AG04450 (cell line): ENCODE measurements at regions of chr7 and their contacts with region 1.

Region 1: GRCh38 chr7:84073186-84073875 is 121.3 kb downstream of the SEMA3A start:
- DNase-seq: no peak
- H3K4me3 ChIP-seq: no peak overlapping the region
- H3K27ac ChIP-seq: no peak overlapping the region
- H3K27me3 ChIP-seq: no peaks in the 10 kb centered on the region
- CTCF ChIP-seq: no peak

Region 2: DNA sequence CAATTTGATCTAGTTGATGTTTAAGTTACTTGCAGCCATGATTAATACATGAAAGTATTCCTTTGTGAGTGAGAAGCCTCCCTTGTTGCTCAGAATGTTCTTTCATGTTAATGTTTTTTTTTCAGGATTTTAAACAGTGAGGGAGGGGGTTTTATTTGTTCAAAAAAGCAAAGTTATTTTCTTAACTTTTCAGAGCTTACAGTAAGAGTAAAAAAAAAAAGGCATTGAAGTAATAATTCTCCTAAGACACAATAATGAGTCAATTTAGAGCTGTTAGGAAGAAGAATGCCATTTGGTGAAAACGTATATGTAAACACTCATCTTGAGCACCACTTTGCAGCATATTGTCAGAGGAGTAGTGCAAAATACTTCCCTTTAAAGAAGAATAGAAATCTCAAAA is 15.5 kb after region 1 on chr7:
- CTCF ChIA-PET with region 1: no interaction called
- POLR2A ChIA-PET with region 1: interaction called, 12 read pairs
- DNase-seq: no peak
- H3K4me3 ChIP-seq: no peak overlapping the region
- H3K27ac ChIP-seq: no peak overlapping the region
- H3K27me3 ChIP-seq: no peaks in the 10 kb centered on the region
- CTCF ChIP-seq: no peak

Region 3: DNA sequence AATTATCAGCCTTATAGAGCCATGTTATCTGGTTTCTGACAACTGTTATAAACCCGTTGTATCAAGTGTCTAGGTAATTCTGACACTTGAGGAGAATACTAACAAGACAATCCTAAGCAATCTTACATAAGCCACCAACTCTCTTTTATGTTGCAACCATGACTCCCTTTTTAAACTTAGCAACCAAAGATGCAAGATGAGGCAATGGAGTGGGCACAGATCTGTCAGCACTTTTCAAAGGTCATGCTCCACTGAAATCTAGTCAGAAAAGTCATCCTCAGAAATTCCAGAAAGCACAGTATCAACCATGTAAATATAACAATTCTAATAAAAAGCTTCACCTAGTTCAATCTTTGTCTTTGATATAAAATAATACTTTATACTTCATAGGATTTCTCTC is 198.2 kb after region 1 on chr7:
- CTCF ChIA-PET with region 1: no interaction called
- POLR2A ChIA-PET with region 1: no interaction called
- DNase-seq: no peak
- H3K4me3 ChIP-seq: no peak overlapping the region
- H3K27ac ChIP-seq: no peak overlapping the region
- H3K27me3 ChIP-seq: no peaks in the 10 kb centered on the region
- CTCF ChIP-seq: no peak